RWPE1 (cell line): ENCODE measurements at regions of chr9 and their contacts with region 1.

Region 1: GRCh38 chr9:120714088-120714845 is at the start of gene MEGF9:
- DNase-seq: peak; percentile 100
- H3K27ac ChIP-seq: peak within 1 kb of the TSS; percentile 71
- CTCF ChIP-seq: no peak

Region 2: DNA sequence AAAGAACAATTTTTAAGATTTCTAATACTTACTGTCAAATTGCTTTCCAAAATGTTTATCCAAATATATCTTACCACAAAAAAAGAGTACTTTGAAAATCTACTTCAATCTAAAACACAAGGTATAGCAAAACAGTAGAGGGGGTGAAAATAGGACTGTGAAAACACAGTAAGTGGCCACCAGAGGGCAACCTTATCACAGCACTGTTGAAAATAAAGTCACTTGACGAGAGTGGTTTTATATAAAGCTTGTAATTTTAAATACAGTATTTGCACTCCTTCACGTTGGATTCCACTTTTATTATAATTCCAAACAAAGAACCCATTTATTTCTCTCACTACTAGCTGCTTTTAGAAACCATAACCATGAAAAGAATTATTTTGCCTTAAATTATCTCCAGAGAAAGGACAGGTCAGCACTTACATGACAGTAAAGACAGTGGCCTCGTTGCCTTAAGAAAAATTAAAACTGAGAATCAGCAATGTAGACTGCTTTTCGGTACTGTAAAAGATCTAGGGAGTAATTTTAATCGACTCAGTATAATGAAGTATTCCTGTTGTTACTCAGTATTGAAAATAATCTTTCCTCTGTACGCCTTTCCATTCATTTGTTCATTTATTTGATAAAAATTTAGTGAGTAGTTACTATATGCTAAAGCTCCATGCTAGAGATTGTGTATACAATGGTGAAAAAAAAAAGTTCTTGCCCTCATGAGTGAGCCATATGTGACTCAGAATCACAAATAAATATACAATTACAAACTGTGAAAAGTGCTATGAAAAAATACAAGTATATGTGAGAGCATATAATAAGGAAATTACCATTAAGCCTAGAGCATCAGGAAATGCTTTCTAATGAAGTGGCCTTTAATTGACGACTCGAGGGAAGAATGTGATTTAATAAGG is 94.3 kb before region 1 on chr9:
- CTCF ChIA-PET with region 1: interaction called, 11 read pairs
- POLR2A ChIA-PET with region 1: no interaction called
- DNase-seq: peak; percentile 85
- H3K27ac ChIP-seq: no peak overlapping the region
- CTCF ChIP-seq: peak; percentile 99